Calu3 (cell line): ENCODE measurements at regions of chr3 and their contacts with region 1.

Region 1: DNA sequence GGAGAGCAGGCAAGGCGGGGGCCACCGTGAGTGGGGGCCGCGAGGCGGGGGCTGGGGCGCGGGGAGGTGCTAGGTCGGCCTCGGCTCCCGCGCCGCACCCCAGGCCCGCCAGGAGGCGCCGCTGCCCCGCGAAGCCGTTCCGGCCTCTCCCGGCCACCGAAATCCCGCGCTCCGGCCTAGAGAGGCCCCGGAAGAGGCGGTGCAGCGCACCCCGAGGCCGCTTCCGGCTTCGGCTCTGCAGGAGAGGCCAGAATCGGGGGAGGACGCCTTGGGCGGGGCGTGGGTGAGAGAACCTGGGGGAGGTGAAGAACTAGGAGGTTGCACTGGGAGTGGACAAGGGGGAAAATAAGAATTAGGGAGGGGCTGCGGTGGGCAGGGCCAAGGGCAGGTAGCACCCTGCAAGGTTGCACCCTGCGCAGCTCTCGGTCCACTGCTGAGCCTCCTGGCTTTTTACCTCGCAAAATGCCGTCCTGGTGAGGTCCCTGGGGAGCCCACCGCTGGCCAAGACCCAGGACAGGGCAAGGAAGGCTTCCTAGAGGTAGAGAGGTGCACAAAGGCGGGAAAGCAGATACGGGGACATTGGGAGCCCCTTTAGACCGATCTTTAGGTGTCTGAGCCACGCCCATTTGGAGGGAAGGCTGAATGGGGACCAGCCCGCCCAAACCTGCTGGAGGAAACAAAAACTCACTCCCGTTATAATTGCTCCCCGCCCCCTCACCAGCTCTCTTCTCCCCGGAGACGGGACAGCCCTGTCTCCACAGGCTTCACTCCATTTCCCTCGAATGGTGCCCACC is 8.4 kb upstream of the GNAI2 start:
- DNase-seq: peak; percentile 97
- H3K4me3 Mint-ChIP-seq: peak overlapping the region; percentile 75
- H3K27ac Mint-ChIP-seq: peak overlapping the region; percentile 60
- H3K4me1 Mint-ChIP-seq: peaks cover 27% of the 10 kb centered on the region
- H3K27me3 Mint-ChIP-seq: peaks cover 26% of the 10 kb centered on the region
- CTCF ChIP-seq: peak; percentile 73

Region 2: DNA sequence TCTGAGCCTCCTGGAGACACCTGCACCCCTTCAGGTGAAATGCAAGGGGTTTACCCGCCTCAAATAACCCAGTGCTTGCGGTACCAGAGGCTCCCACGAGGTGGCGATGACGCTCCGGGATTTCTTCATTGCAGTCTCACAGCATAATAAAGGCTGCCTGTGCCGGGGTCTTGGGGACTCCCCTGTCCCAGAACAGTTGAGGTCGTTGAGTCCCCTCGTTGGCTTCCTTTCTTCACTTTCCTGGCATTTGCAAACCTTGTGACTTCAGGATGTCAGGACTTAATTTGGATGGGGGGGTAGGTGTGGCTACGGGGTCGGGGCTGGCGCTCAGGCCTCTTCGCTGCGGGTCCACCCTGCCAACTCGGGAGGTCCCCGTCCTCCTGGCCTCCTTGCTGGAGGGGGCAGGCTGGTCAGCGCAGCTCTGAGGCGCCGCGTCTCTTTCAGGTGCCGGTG is 34.9 kb before region 1 on chr3:
- CTCF ChIA-PET with region 1: interaction called, 12 read pairs
- intact Hi-C with region 1: loop called (anchors 1 kb)
- DNase-seq: peak; percentile 84
- H3K4me3 Mint-ChIP-seq: no peak overlapping the region
- H3K27ac Mint-ChIP-seq: no peak overlapping the region
- H3K4me1 Mint-ChIP-seq: no peaks in the 10 kb centered on the region
- H3K27me3 Mint-ChIP-seq: peaks cover 15% of the 10 kb centered on the region
- CTCF ChIP-seq: peak; percentile 92

Region 3: DNA sequence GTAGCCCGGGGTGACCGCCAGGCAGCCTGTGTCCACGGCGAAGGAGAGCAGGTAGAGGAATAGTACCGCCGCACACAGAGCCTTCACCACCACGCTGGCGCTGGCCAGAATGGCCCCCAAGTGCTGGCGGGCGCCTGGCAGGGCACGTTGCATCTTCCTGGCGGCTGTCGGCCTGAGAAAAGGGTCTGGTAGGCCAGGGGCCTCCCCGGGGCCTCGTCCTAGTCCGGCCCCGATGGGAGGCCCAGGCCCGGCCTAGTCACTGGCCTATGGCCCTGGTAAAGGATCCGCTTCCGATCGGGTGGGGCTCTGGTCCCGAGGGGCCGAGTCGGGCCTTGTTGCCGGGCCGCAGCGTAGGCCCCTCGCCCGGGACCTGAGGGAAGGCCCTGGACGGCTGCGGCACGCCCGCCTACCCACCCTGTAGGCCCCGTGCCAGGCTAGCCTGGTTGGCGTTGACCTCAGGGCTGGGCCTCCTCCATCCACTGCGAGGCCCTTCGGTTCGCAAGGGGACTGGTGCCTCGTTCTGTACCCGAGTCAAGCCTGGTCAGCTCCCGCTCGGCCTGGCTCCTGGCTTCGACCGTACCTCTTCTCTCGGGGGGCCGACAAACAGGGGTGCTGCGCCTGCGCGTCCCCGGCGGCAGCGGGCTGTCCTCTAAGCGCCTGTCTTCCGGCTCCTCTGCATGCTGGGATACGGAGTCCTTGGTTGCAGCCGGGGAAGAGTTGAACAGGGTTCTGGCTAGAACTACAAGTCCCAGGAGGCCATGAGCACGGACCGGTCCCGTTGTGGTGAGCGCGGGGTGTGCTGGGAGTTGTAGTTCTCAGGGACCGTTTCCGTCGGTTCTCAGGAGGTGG is 131.5 kb after region 1 on chr3 and contains the start of gene TMEM115:
- CTCF ChIA-PET with region 1: no interaction called
- intact Hi-C with region 1: no loop called
- DNase-seq: peak; percentile 94
- H3K4me3 Mint-ChIP-seq: peak within 1 kb of the TSS; percentile 96
- H3K27ac Mint-ChIP-seq: peak within 1 kb of the TSS; percentile 92
- H3K4me1 Mint-ChIP-seq: peaks cover 10% of the 10 kb centered on the region
- H3K27me3 Mint-ChIP-seq: peaks cover 15% of the 10 kb centered on the region
- CTCF ChIP-seq: no peak
- total RNA-seq, gene TMEM115: 29.3 and 29.4 TPM in 2 replicates